A673 (cell line): ENCODE measurements at regions of chr1 and their contacts with region 1.

Region 1: DNA sequence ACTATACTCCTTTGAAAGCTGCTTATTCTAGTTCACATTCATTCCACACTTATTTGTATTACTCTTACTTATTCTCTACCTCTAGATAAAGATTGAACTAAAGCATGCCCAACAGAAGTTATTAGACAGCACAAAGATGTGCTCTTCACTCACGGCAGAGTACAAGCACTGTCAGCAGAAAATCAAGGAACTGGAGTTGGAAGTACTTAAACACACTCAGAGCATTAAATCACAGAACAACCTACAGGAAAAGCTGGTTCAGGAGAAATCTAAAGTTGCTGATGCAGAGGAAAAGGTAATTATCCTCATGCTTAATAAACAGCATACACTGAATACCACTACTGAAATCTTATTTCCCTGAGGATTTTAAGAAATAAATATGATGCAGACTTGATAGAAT is 81.3 kb upstream of the PPIH start:
- DNase-seq: peak; percentile 10
- H3K4me3 ChIP-seq: no peak overlapping the region
- H3K27ac ChIP-seq: no peak overlapping the region
- H3K4me1 ChIP-seq: no peaks in the 10 kb centered on the region
- H3K27me3 ChIP-seq: no peaks in the 10 kb centered on the region
- CTCF ChIP-seq: no peak

Region 2: DNA sequence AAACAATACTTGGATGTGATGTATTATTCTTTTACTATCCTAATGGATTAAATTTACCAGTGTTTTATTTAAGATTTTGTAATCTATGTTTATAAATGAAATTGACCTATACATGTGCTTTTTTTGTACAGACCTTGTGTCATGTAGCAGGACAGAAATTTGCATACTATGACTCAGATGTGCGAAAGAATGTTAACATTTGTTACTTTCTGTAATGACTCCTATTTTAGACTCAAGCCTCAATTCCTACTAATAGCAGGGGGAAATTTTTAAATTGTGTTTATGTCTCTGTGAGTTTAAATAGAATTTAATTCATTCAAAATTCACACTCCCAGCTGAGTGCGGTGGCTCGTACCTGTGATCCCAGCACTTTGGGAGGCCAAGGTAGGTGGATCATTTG is 218.1 kb before region 1 on chr1:
- CTCF ChIA-PET with region 1: no interaction called
- POLR2A ChIA-PET with region 1: no interaction called
- intact Hi-C with region 1: no loop called
- DNase-seq: no peak
- H3K4me3 ChIP-seq: no peak overlapping the region
- H3K27ac ChIP-seq: no peak overlapping the region
- H3K4me1 ChIP-seq: no peaks in the 10 kb centered on the region
- H3K27me3 ChIP-seq: no peaks in the 10 kb centered on the region
- CTCF ChIP-seq: no peak

Region 3: DNA sequence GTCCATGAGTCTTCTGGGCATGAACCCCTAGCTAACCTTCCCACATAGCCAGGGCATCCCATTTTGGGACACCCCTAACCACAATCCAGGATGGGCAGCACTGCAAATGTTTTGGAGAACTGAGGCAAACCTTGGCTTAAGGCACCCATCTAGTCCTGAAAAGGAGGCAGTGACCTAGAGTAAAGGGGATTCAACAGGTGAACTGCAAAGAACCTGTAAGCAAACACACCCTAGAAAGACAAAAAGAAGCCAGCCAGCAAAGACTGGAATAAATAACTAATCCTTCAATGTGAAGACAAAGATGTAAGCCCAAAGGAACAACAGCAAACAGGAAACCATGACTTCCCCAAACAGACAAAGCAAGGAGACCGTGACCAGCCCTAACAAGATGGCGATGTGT is 24.5 kb after region 1 on chr1:
- CTCF ChIA-PET with region 1: no interaction called
- POLR2A ChIA-PET with region 1: no interaction called
- intact Hi-C with region 1: no loop called
- DNase-seq: no peak
- H3K4me3 ChIP-seq: no peak overlapping the region
- H3K27ac ChIP-seq: no peak overlapping the region
- H3K4me1 ChIP-seq: no peaks in the 10 kb centered on the region
- H3K27me3 ChIP-seq: no peaks in the 10 kb centered on the region
- CTCF ChIP-seq: no peak

Region 4: GRCh38 chr1:42684139-42684538 is 107.2 kb after region 1 on chr1:
- CTCF ChIA-PET with region 1: no interaction called
- POLR2A ChIA-PET with region 1: no interaction called
- intact Hi-C with region 1: no loop called
- DNase-seq: peak; percentile 71
- H3K4me3 ChIP-seq: peak overlapping the region; percentile 79
- H3K27ac ChIP-seq: no peak overlapping the region
- H3K4me1 ChIP-seq: peaks cover 31% of the 10 kb centered on the region
- H3K27me3 ChIP-seq: no peaks in the 10 kb centered on the region
- CTCF ChIP-seq: no peak

Region 5: GRCh38 chr1:42747125-42747524 is 170.2 kb after region 1 on chr1:
- CTCF ChIA-PET with region 1: interaction called, 6 read pairs
- POLR2A ChIA-PET with region 1: interaction called, 3 read pairs
- intact Hi-C with region 1: loop called (anchors 1 kb)
- DNase-seq: peak; percentile 61
- H3K4me3 ChIP-seq: no peak overlapping the region
- H3K27ac ChIP-seq: no peak overlapping the region
- H3K4me1 ChIP-seq: no peaks in the 10 kb centered on the region
- H3K27me3 ChIP-seq: no peaks in the 10 kb centered on the region
- CTCF ChIP-seq: peak; percentile 76

Region 6: GRCh38 chr1:42913426-42914091 is 336.6 kb after region 1 on chr1:
- CTCF ChIA-PET with region 1: no interaction called
- POLR2A ChIA-PET with region 1: no interaction called
- intact Hi-C with region 1: loop called (anchors 10 kb)
- DNase-seq: peak; percentile 90
- H3K4me3 ChIP-seq: no peak overlapping the region
- H3K27ac ChIP-seq: no peak overlapping the region
- H3K4me1 ChIP-seq: no peaks in the 10 kb centered on the region
- H3K27me3 ChIP-seq: no peaks in the 10 kb centered on the region
- CTCF ChIP-seq: peak; percentile 67